CD14-positive monocyte (primary cell): ENCODE measurements at regions of chr1 and their contacts with region 1.

Region 1: GRCh38 chr1:151399890-151400495 is 620 bp downstream of the PSMB4 start:
- DNase-seq: peak in 1 of 3 donors; percentile 17
- H3K4me3 ChIP-seq: peak overlapping the region; percentile 76 to 99 (median 84)
- H3K4me3 Mint-ChIP-seq: peak overlapping the region; percentile 86 to 92
- H3K27ac ChIP-seq: peak overlapping the region; percentile 73 to 98
- H3K27ac Mint-ChIP-seq: peak overlapping the region; percentile 95 to 98 (median 97)
- H3K4me1 ChIP-seq: peaks cover 9 to 17% of the 10 kb centered on the region in 2 donors
- H3K4me1 Mint-ChIP-seq: peaks cover 15% of the 10 kb centered on the region
- H3K27me3 ChIP-seq: no peaks in the 10 kb centered on the region
- H3K27me3 Mint-ChIP-seq: peaks cover 0 to 7% (median 0%) of the 10 kb centered on the region in 3 donors
- CTCF ChIP-seq: no peak

Region 2: GRCh38 chr1:151036363-151036762 is 363.6 kb before region 1 on chr1 and contains the start of gene BNIPL:
- intact Hi-C with region 1: no loop called
- DNase-seq: no peak
- H3K4me3 ChIP-seq: no peak within 1 kb of the TSS
- H3K4me3 Mint-ChIP-seq: no peak within 1 kb of the TSS
- H3K27ac ChIP-seq: no peak within 1 kb of the TSS
- H3K27ac Mint-ChIP-seq: peak within 1 kb of the TSS in 1 of 7 donors; percentile 1
- H3K4me1 ChIP-seq: peaks cover 0 to 6% of the 10 kb centered on the region in 2 donors
- H3K4me1 Mint-ChIP-seq: peaks cover 7% of the 10 kb centered on the region
- H3K27me3 ChIP-seq: no peaks in the 10 kb centered on the region
- H3K27me3 Mint-ChIP-seq: peaks cover 0 to 4% (median 0%) of the 10 kb centered on the region in 3 donors
- CTCF ChIP-seq: no peak
- polyA plus RNA-seq, gene BNIPL: 0.77 TPM in 1 of 3 donors, not detected in the others

Region 3: DNA sequence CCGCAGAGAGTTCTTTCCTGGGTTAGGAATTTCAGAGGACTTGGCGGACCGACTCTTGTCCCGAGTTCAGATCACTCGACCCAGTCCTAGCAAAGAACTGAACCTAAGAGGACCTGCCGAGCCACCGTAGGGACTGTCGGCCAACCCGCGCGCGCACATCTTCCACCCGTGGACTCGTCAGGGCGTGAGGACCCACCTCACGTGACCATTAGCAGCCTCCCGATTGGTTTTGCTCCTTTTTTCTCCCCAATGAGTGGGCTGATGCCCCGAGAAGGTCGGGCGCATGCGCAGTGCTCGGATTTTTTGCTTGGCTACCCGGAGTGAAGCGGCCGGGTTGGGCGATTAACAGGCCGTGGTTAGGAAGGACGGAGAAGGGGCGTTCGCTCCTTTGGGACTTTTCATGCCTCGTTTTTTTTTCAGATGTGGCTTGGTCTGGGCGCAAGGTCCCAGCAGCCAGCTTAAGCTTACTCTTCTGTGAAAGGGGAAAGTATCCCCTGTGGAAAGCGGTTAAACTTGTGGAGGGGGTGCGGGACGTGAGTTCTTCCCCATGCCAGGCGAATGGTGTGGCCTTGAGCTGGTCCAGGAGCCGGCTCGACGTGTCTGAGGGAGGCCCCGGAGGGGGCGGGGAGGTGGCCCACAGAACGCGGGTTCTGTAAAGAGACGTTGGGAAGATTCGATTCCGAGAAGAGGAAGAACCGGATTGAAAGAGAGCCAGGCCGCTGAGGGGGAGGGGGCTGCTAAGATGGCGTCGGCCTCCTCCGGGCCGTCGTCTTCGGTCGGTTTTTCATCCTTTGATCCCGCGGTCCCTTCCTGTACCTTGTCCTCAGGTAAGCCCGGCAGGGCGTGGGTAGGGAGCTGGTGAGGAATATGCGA is 201.5 kb before region 1 on chr1 and contains the start of gene PIP5K1A:
- intact Hi-C with region 1: loop called in 1 of 2 experiments (anchors 10 kb)
- DNase-seq: peak; percentile 98 to 100 (median 99)
- H3K4me3 ChIP-seq: peak within 1 kb of the TSS; percentile 54 to 90 (median 67)
- H3K4me3 Mint-ChIP-seq: peak within 1 kb of the TSS; percentile 97 to 99
- H3K27ac ChIP-seq: peak within 1 kb of the TSS; percentile 89 to 90
- H3K27ac Mint-ChIP-seq: peak within 1 kb of the TSS; percentile 98 to 99 (median 99)
- H3K4me1 ChIP-seq: peaks cover 25 to 37% of the 10 kb centered on the region in 2 donors
- H3K4me1 Mint-ChIP-seq: peaks cover 42% of the 10 kb centered on the region
- H3K27me3 ChIP-seq: peaks cover 0 to 2% of the 10 kb centered on the region in 2 donors
- H3K27me3 Mint-ChIP-seq: peaks cover 4 to 8% (median 4%) of the 10 kb centered on the region in 3 donors
- CTCF ChIP-seq: no peak
- polyA plus RNA-seq, gene PIP5K1A: 10.8 to 47.7 (median 11.7) TPM

Region 4: GRCh38 chr1:151294742-151295462 is 105.1 kb before region 1 on chr1:
- intact Hi-C with region 1: loop called in 1 of 2 experiments (anchors 5 kb)
- DNase-seq: no peak
- H3K4me3 ChIP-seq: no peak overlapping the region
- H3K4me3 Mint-ChIP-seq: no peak overlapping the region
- H3K27ac ChIP-seq: peak overlapping the region in 1 of 2 donors; percentile 46
- H3K27ac Mint-ChIP-seq: peak overlapping the region in 3 of 7 donors; percentile 10 to 36 (median 35)
- H3K4me1 ChIP-seq: peaks cover 0 to under 1% of the 10 kb centered on the region in 2 donors
- H3K4me1 Mint-ChIP-seq: peaks cover 5% of the 10 kb centered on the region
- H3K27me3 ChIP-seq: no peaks in the 10 kb centered on the region
- H3K27me3 Mint-ChIP-seq: peaks cover 0 to 2% (median 0%) of the 10 kb centered on the region in 3 donors
- CTCF ChIP-seq: no peak

Region 5: DNA sequence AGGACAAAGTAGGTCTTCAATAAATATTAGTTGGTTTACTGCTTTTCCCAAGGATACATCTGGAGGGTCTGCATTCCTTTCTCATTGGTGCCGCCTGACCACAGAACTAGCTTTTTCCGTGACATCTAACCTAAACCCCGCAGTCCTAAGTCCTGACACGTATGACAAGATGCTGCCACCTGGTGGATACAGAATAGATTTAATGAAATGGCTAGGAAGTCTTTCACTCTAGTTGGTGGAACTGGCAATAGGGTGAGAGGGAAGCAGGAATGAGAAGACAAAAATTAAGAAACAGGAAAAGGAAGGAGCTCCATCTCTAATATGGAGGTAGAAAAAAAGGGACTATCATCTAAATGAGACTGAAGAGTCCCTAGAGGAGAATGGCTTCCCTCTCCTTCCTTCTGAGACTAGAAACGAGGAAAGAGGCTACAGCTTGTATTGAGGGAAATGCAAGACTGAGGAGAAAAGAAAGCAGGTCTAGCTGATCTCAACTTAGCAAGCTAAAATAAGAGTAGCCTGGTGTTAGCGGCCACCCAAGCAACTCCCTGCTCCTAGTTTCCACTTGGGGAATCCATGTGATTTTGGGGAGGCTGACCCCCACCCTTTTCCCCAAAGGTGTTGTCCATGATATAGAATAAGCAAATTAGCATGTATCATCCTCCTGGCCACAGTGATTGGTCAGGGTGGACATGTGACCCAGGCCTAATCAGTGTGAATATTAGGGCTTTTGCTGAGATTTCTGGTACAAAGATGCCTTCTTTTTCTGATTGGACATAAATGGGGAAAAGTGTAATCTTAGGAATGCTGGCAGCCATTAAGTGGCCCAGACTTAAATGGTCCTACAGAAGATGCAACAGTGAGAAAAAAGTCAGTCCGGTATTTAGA is 58.9 kb before region 1 on chr1:
- intact Hi-C with region 1: loop called (anchors 5 kb)
- DNase-seq: peak; percentile 68 to 84 (median 83)
- H3K4me3 ChIP-seq: no peak overlapping the region
- H3K4me3 Mint-ChIP-seq: no peak overlapping the region
- H3K27ac ChIP-seq: peak overlapping the region; percentile 26 to 57
- H3K27ac Mint-ChIP-seq: peak overlapping the region; percentile 3 to 91 (median 63)
- H3K4me1 ChIP-seq: peaks cover 14 to 20% of the 10 kb centered on the region in 2 donors
- H3K4me1 Mint-ChIP-seq: peaks cover 24% of the 10 kb centered on the region
- H3K27me3 ChIP-seq: no peaks in the 10 kb centered on the region
- H3K27me3 Mint-ChIP-seq: no peaks in the 10 kb centered on the region
- CTCF ChIP-seq: peak; percentile 81

Region 6: DNA sequence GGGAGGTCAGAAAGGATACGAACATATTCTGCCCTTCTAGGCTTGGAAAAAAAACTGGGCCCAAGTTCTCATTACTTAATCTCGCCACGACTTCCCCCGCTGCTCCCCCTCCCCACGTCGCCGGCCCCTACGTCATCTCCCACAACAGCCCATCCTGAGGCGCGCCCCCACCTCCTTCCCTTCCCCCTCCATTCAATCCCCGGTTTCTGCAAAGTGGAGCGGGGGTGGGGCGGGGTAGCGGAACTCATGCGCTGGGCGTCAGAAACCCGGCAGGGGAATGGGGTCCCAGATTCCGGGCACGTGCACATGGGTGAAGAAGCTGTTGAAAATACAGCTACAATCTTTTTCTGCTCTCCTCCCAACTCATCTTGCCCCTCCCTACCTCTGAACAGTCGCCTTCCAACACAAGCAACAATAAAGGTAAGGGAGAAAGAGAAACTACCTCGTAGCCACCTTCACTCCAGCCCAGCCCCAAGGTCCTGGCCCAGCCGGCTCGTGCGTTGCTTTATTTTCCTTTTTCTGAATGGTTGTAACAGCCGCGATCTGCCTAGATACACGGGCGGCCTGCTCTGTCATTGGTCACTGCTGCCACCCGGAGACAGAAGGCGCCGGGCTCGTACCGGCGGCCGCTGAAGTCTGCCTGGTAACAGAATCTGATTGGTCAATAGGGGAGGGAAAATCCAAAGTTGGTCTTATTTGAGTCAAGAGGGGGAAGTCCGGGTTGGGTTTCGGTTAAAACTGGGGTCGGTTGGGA is 53.0 kb before region 1 on chr1 and contains the start of gene RFX5:
- intact Hi-C with region 1: loop called (anchors 5 kb)
- DNase-seq: peak; percentile 98 to 99 (median 98)
- H3K4me3 ChIP-seq: peak within 1 kb of the TSS; percentile 76 to 89 (median 80)
- H3K4me3 Mint-ChIP-seq: peak within 1 kb of the TSS; percentile 93 to 94
- H3K27ac ChIP-seq: peak within 1 kb of the TSS; percentile 98
- H3K27ac Mint-ChIP-seq: peak within 1 kb of the TSS; percentile 99 to 100 (median 100)
- H3K4me1 ChIP-seq: peaks cover 17 to 22% of the 10 kb centered on the region in 2 donors
- H3K4me1 Mint-ChIP-seq: peaks cover 25% of the 10 kb centered on the region
- H3K27me3 ChIP-seq: no peaks in the 10 kb centered on the region
- H3K27me3 Mint-ChIP-seq: peaks cover 0 to 2% (median 0%) of the 10 kb centered on the region in 3 donors
- CTCF ChIP-seq: no peak
- polyA plus RNA-seq, gene RFX5: 39.3 to 66.3 (median 43.5) TPM